ENCODE measurements at regions of chr20 and their contacts with region 1.

Region 1: DNA sequence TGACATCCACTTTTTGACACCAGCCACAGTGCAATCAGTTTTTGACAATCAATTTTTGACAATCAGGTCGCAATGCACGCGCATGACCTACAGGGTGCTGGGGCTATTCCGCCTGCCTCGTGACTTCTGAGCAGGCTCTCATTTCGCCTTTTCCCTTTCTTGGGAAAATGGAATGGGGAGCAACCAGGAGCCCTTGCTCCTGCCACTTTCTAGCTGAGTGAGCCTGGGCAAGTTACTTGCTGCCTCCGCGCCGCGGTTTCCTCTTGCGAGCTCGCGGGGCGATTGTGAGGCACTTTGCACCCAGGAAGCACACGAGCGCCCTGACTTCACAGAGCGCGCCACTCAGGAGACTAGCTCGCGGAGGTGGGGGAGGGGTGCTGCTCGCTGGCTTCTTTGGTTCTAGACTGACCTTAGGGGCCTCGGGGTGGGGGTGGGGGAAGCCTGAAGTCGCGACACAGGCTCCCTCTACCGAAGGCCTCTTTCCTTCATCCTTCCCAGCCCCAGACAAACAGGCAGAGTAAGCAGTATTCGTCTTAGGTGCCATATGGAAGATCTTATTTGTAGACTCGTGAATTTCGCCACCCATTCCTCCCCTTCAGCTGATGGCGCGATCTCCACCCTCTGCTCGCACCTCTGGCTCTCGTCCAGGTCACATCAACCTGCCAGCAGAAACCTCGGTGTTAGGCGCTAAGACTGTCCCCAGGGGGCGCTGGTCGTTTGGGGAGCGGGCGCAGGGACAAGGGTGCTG is 4.6 kb downstream of the TP53TG5 start:
- DNase-seq: peak; percentile 91 to 92
- ATAC-seq: peak; percentile 72 to 95 (median 92)
- H3K4me3 ChIP-seq: peak overlapping the region; percentile 22 to 66 (median 62)
- H3K27ac ChIP-seq: peak overlapping the region in 9 of 10 donors; percentile 39 to 85 (median 70)
- H3K4me1 ChIP-seq: peaks cover 0 to 27% (median 10%) of the 10 kb centered on the region in 9 donors
- H3K27me3 ChIP-seq: no peaks in the 10 kb centered on the region
- CTCF ChIP-seq: peak; percentile 82 to 96 (median 93)

Region 2: GRCh38 chr20:45322952-45323383 is 50.6 kb before region 1 on chr20:
- intact Hi-C with region 1: loop called in 4 of 10 experiments (anchors 5 kb)
- DNase-seq: peak in 1 of 2 donors; percentile 62
- ATAC-seq: peak; percentile 68 to 85 (median 80)
- H3K4me3 ChIP-seq: no peak overlapping the region
- H3K27ac ChIP-seq: no peak overlapping the region
- H3K4me1 ChIP-seq: peaks cover 0 to 15% (median 0%) of the 10 kb centered on the region in 9 donors
- H3K27me3 ChIP-seq: peaks cover 0 to 3% (median 0%) of the 10 kb centered on the region in 7 donors
- CTCF ChIP-seq: peak in 8 of 9 donors; percentile 12 to 63 (median 48)

Region 3: GRCh38 chr20:45337367-45338120 is 36.0 kb before region 1 on chr20:
- intact Hi-C with region 1: no loop called
- DNase-seq: peak; percentile 47 to 53
- ATAC-seq: peak; percentile 42 to 67 (median 55)
- H3K4me3 ChIP-seq: peak overlapping the region in 2 of 10 donors; percentile 0 to 12
- H3K27ac ChIP-seq: peak overlapping the region; percentile 75 to 97 (median 94)
- H3K4me1 ChIP-seq: peaks cover 12 to 71% (median 51%) of the 10 kb centered on the region in 9 donors
- H3K27me3 ChIP-seq: no peaks in the 10 kb centered on the region
- CTCF ChIP-seq: no peak

Region 4: GRCh38 chr20:45406259-45407066 is 32.9 kb after region 1 on chr20:
- intact Hi-C with region 1: loop called in 4 of 10 experiments (anchors 2 to 5 kb)
- DNase-seq: peak; percentile 83 to 91
- ATAC-seq: peak; percentile 56 to 84 (median 71)
- H3K4me3 ChIP-seq: peak overlapping the region; percentile 41 to 97 (median 88)
- H3K27ac ChIP-seq: peak overlapping the region; percentile 94 to 100 (median 98)
- H3K4me1 ChIP-seq: peaks cover 0 to 47% (median 39%) of the 10 kb centered on the region in 9 donors
- H3K27me3 ChIP-seq: peaks cover 0 to 23% (median 0%) of the 10 kb centered on the region in 7 donors
- CTCF ChIP-seq: peak in 4 of 9 donors; percentile 9 to 45 (median 28)

Region 5: DNA sequence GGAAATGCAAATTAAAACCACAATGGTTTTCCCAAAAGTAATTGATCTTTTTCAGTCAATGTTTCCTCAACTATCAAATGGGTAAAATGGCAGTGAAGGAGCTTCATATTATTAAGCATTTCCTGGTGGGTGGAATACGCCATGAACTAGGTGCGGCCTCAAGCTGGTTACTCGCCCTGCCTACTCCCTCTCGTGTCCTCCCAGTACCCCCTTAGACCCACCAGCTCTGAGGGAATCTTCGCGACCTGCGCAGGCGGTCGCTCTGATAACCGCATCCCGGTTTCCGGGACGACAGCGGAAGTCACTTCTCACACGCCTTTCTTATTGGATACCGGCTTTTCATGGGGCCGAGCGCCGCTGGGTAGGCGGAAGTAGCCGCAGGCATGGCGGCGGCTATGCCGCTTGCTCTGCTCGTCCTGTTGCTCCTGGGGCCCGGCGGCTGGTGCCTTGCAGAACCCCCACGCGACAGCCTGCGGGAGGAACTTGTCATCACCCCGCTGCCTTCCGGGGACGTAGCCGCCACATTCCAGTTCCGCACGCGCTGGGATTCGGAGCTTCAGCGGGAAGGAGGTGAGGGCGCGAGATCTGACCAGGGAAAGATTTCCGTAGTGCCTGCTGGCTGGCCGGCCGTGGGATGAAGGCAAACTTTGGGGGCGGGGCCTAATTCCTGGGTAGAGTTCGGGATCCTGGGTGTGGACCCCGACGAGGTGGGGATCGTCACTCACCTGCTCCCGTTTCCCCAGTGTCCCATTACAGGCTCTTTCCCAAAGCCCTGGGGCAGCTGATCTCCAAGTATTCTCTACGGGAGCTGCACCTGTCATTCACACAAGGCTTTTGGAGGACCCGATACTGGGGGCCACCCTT is 42.5 kb after region 1 on chr20 and contains the start of gene PIGT:
- intact Hi-C with region 1: loop called in 1 of 10 experiments (anchors 5 kb)
- DNase-seq: peak; percentile 84 to 89
- ATAC-seq: peak; percentile 63 to 93 (median 84)
- H3K4me3 ChIP-seq: peak within 1 kb of the TSS; percentile 60 to 98 (median 91)
- H3K27ac ChIP-seq: peak within 1 kb of the TSS; percentile 55 to 92 (median 83)
- H3K4me1 ChIP-seq: peaks cover 0 to 65% (median 46%) of the 10 kb centered on the region in 9 donors
- H3K27me3 ChIP-seq: no peaks in the 10 kb centered on the region
- CTCF ChIP-seq: no peak
- total RNA-seq, gene PIGT: 130 to 221 (median 144) TPM

Region 6: DNA sequence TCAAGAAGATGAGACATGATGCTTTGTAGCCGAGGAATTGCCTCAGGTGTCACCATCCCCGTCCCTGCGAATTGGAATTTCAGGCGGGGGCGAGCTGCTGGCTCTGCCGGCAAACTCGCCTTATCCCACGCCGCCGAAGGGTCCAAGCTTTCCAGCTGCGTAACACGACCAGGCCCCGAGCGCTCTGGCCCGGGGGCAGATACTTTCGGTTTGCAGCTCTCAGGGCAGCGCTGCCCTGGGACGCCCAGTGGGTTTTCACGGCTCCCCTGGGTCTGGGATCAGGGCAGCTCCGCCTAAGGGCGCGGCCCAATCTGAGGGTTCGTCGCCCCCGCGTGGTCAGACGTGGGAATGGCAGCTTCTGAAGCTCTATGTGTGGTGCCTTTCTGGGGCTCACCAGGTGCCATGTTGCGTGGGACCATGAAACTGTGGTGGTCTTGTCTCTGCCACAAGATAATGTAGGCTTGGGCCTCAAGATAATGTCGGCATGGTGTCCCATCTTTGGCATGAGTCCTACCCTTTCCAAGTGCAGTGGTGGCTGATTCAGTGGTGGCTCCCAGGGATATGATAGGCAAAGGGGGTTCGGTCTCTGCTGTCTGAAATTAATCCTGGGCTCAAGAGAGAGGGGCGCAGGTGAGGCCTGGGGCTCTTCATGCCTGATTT is 63.3 kb after region 1 on chr20:
- intact Hi-C with region 1: loop called in 9 of 10 experiments (anchors 1 to 5 kb)
- DNase-seq: peak; percentile 89 to 90
- ATAC-seq: peak; percentile 93 to 97 (median 96)
- H3K4me3 ChIP-seq: peak overlapping the region; percentile 36 to 79 (median 59)
- H3K27ac ChIP-seq: peak overlapping the region in 9 of 10 donors; percentile 55 to 86 (median 76)
- H3K4me1 ChIP-seq: peaks cover 0 to 16% (median 11%) of the 10 kb centered on the region in 9 donors
- H3K27me3 ChIP-seq: no peaks in the 10 kb centered on the region
- CTCF ChIP-seq: peak in 8 of 9 donors; percentile 94 to 98 (median 97)

Measured in heart right ventricle (tissue), 16 donors.